ENCODE measurements at regions of chr17 and their contacts with region 1.

Region 1: GRCh38 chr17:75393523-75394331 is 11.8 kb downstream of the GRB2 start:
- DNase-seq: peak; percentile 100
- ATAC-seq: peak; percentile 97
- H3K4me3 Mint-ChIP-seq: peak overlapping the region; percentile 94
- H3K27ac Mint-ChIP-seq: peak overlapping the region; percentile 95
- H3K4me1 Mint-ChIP-seq: peaks cover 42% of the 10 kb centered on the region
- H3K27me3 Mint-ChIP-seq: peaks cover 2% of the 10 kb centered on the region; the same call in 1 of the 2 replicates
- CTCF ChIP-seq: no peak

Region 2: DNA sequence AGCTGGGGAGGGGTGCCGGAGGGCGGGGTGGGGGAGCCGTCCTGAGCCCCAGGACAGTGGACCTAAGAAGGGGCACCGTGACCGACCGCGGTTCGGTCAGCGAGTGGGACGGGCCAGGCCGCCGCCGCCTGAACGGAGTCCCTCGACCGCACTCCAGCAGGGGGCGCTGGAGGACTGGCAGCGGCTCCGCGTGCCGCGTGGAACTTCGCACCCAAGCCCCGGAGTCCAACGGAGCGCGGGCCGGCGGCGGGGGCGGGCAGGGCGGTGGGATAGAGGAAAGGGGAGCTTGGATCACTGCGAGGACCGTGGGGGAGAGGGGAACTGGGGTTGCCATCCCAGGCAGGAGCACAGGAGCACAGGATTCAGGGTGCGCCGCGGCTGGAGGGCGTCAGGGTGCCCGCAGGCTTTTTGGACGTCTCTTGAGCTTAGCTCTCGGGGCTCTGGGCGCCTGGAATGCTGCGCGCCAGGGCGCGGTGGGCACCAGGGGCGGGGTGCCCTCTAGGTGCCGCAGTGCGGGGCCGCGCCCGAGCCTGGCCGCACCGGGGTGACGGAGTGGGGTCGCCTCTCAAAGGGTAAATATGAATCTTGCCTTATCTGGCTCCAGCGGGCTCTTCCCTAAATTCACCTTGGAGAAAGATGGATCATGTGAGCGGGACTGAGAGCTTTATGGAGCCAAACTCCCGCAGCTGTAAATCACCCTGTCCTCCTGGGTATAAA is 470.0 kb before region 1 on chr17:
- CTCF ChIA-PET with region 1: no interaction called
- POLR2A ChIA-PET with region 1: no interaction called
- DNase-seq: peak; percentile 79
- ATAC-seq: peak; percentile 18
- H3K4me3 Mint-ChIP-seq: peak overlapping the region; percentile 70
- H3K27ac Mint-ChIP-seq: no peak overlapping the region
- H3K4me1 Mint-ChIP-seq: peaks cover 13% of the 10 kb centered on the region
- H3K27me3 Mint-ChIP-seq: peaks cover 74% of the 10 kb centered on the region
- CTCF ChIP-seq: peak; percentile 91

Region 3: DNA sequence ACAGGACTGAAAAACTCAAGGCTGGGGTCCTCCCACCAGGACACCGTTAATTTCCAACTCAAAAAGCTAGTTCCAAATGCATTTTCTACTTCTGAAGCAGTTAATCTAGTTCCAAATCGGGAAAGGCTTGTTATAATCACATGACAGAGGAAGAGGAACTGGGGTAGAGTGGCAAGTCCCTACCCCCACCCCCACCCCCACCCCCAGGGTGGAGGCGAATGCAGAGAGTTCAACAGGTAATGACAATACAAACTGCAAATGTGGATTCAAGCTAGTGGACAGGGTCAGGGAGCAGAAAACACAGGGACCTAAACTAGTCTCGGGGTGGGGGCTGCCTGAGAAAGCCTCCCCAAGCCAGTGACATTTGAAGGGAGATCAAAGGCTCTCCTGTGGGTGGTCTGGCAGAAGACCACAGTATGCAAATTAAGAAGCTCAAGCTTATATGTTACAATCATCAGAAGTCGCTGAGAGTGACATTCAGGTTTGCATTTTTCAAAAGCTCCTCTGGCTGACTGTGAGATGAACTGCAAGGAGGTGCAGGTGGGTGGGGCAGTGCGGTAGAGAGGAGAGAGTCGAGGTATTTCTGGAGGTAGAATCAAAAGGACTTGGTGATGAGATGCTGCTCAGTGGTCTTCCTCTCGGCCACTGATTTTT is 48.1 kb before region 1 on chr17:
- CTCF ChIA-PET with region 1: interaction called, 10 read pairs
- POLR2A ChIA-PET with region 1: interaction called, 8 read pairs
- DNase-seq: peak; percentile 27
- ATAC-seq: peak; percentile 51
- H3K4me3 Mint-ChIP-seq: peak overlapping the region; percentile 67
- H3K27ac Mint-ChIP-seq: peak overlapping the region; percentile 98
- H3K4me1 Mint-ChIP-seq: peaks cover 84% of the 10 kb centered on the region
- H3K27me3 Mint-ChIP-seq: no peaks in the 10 kb centered on the region
- CTCF ChIP-seq: no peak

Region 4: GRCh38 chr17:75405365-75406221 is 11.9 kb after region 1 on chr17 and contains the start of gene GRB2:
- CTCF ChIA-PET with region 1: interaction called, 11 read pairs
- POLR2A ChIA-PET with region 1: interaction called, 9 read pairs
- DNase-seq: peak; percentile 99
- ATAC-seq: peak; percentile 88
- H3K4me3 Mint-ChIP-seq: peak within 1 kb of the TSS; percentile 87
- H3K27ac Mint-ChIP-seq: no peak within 1 kb of the TSS
- H3K4me1 Mint-ChIP-seq: peaks cover 15% of the 10 kb centered on the region
- H3K27me3 Mint-ChIP-seq: peaks cover 3% of the 10 kb centered on the region; the same call in 1 of the 2 replicates
- CTCF ChIP-seq: no peak
- total RNA-seq, gene GRB2: 82.9 to 93.3 TPM (median 92.6 TPM) in 3 replicates

Measured in WTC11 (cell line).